ENCODE measurements at regions of chr11 and their contacts with region 1.

Region 1: DNA sequence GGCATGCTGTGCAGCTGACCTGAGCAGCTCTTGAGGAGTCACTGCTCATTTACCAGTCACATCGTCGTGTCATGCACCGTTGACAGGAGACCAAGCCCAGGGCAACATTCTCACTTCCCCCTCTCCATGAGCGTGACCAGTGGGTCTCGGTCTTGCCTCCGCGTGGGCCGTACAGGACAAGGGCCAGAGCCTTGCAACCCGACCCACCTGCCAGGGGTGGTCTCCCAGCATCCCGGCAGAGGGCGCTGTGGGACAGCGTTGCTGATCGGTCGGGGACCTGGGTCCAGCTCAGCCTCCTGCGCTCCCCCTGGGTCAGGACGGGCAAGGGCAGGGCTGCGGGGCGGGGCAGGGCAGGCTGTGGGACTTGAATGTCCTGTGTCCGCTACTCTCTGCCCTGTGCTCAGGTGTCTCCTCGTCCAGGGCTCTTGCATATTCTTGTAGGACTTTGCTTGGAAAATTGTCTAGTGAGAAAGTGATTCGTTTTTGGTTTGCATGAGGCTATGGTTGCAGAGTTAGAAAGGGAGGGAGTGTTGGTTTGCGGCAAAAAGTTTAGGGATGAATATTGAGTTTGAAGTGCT is 16.2 kb downstream of the EIF4G2 start:
- DNase-seq: peak; percentile 80 to 90
- H3K4me3 ChIP-seq: peak overlapping the region in 1 of 2 donors; percentile 7
- H3K27ac ChIP-seq: no peak overlapping the region
- H3K4me1 ChIP-seq: peaks cover 0 to 9% (median 7%) of the 10 kb centered on the region in 4 donors
- H3K27me3 ChIP-seq: no peaks in the 10 kb centered on the region
- CTCF ChIP-seq: peak; percentile 91 to 95

Region 2: DNA sequence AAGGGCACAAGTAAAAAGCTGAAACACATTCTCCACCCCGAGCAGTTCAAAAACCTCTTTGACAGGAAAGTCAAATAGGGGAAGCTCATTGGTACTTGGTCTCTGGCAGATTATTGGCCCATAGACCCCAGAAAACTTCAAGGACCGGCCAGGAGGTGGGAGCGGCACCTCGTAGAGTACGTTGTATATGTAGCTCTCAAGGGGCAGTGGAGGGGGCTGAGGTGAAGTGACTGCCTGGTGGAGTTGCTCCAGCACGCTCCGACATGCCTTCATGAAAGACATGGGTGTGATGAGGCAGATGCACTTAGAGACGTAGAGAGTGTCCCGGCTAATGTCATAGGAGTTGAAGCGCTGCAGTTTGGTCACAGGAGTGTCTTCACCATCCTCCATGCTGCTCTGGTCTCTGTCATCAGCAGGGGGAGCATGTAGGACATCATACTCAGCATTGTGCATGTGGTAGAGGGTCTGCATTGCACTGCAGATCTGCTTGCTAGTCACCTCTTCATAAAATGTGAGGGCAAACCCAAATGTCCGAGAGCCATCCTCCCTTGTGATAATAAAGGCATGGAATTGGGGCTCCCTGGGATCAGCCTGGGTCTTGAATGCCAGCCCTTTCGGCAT is 1588.7 kb before region 1 on chr11:
- intact Hi-C with region 1: no loop called
- DNase-seq: no peak
- H3K4me3 ChIP-seq: no peak overlapping the region
- H3K27ac ChIP-seq: no peak overlapping the region
- H3K4me1 ChIP-seq: peaks cover 0 to 14% (median 4%) of the 10 kb centered on the region in 4 donors
- H3K27me3 ChIP-seq: no peaks in the 10 kb centered on the region
- CTCF ChIP-seq: no peak

Region 3: GRCh38 chr11:10813945-10814344 is 21.5 kb after region 1 on chr11:
- intact Hi-C with region 1: loop called (anchors 1 kb)
- DNase-seq: no peak
- H3K4me3 ChIP-seq: no peak overlapping the region
- H3K27ac ChIP-seq: no peak overlapping the region
- H3K4me1 ChIP-seq: peaks cover 0 to 8% (median 0%) of the 10 kb centered on the region in 4 donors
- H3K27me3 ChIP-seq: no peaks in the 10 kb centered on the region
- CTCF ChIP-seq: no peak

Region 4: GRCh38 chr11:11022125-11022730 is 229.7 kb after region 1 on chr11:
- intact Hi-C with region 1: loop called (anchors 2 kb)
- DNase-seq: no peak
- H3K4me3 ChIP-seq: no peak overlapping the region
- H3K27ac ChIP-seq: no peak overlapping the region
- H3K4me1 ChIP-seq: no peaks in the 10 kb centered on the region
- H3K27me3 ChIP-seq: no peaks in the 10 kb centered on the region
- CTCF ChIP-seq: peak; percentile 43 to 50

Region 5: GRCh38 chr11:11777897-11778296 is 985.4 kb after region 1 on chr11:
- intact Hi-C with region 1: loop called (anchors 10 kb)
- DNase-seq: no peak
- H3K4me3 ChIP-seq: no peak overlapping the region
- H3K27ac ChIP-seq: no peak overlapping the region
- H3K4me1 ChIP-seq: no peaks in the 10 kb centered on the region
- H3K27me3 ChIP-seq: no peaks in the 10 kb centered on the region
- CTCF ChIP-seq: no peak

Measured in tibial artery (tissue), 4 donors.